ENCODE measurements at regions of chr14 and their contacts with region 1.

Region 1: DNA sequence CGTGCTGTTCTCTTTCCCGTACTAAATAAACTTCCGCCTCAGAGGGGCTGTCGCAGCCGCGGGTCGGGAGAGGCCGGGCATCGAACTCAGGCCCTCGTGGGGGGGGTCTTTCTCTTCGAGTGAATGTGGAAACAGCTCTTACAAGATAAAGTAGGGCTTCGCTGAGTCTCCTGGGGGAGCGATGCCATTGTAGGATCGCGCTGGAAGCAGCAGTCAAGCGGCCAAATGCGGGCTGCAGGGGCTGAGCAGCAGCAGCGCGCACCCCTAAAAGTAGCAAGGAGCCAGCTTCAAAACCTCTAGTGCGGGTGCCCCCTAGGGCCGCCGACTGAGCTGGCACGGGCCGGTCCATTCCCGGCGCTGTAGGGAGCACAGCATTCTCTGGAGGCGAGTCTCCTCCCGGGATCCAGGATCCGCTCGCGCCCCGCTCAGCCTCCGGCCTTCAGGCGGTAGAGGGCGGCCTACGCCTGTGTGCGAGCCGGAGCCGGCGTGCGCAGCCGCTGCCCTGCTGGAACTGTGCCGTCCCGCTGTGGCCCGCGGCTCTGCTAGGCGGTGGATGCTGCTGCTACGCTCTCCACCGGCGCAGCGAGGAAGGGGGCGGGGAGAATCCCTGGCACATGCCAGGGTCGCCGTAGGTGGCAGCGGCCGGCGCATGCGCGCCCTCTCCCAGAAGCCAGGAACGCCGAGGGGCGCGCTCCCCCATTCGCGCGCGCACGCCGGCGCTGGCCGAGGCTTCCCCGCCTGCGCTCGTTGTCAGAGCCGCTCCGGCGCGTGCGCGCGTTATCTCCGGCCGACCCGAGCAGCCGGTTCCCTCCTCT is at the start of gene FUT8:
- DNase-seq: peak; percentile 93
- ATAC-seq: peak; percentile 88
- H3K4me3 Mint-ChIP-seq: peak within 1 kb of the TSS; percentile 99
- H3K27ac Mint-ChIP-seq: peak within 1 kb of the TSS; percentile 99
- H3K4me1 Mint-ChIP-seq: peaks cover 42% of the 10 kb centered on the region
- H3K27me3 Mint-ChIP-seq: no peaks in the 10 kb centered on the region
- CTCF ChIP-seq: no peak
- total RNA-seq, gene FUT8: 115 and 123 TPM in 2 replicates

Region 2: GRCh38 chr14:63641473-63642228 is 1770.6 kb before region 1 on chr14 and contains the start of gene WDR89:
- CTCF ChIA-PET with region 1: no interaction called
- POLR2A ChIA-PET with region 1: no interaction called
- intact Hi-C with region 1: loop called (anchors 5 kb)
- DNase-seq: peak; percentile 84
- ATAC-seq: peak; percentile 83
- H3K4me3 Mint-ChIP-seq: peak within 1 kb of the TSS; percentile 92
- H3K27ac Mint-ChIP-seq: peak within 1 kb of the TSS; percentile 98
- H3K4me1 Mint-ChIP-seq: peaks cover 34% of the 10 kb centered on the region
- H3K27me3 Mint-ChIP-seq: no peaks in the 10 kb centered on the region
- CTCF ChIP-seq: no peak
- total RNA-seq, gene WDR89: 21.9 and 24.4 TPM in 2 replicates

Region 3: DNA sequence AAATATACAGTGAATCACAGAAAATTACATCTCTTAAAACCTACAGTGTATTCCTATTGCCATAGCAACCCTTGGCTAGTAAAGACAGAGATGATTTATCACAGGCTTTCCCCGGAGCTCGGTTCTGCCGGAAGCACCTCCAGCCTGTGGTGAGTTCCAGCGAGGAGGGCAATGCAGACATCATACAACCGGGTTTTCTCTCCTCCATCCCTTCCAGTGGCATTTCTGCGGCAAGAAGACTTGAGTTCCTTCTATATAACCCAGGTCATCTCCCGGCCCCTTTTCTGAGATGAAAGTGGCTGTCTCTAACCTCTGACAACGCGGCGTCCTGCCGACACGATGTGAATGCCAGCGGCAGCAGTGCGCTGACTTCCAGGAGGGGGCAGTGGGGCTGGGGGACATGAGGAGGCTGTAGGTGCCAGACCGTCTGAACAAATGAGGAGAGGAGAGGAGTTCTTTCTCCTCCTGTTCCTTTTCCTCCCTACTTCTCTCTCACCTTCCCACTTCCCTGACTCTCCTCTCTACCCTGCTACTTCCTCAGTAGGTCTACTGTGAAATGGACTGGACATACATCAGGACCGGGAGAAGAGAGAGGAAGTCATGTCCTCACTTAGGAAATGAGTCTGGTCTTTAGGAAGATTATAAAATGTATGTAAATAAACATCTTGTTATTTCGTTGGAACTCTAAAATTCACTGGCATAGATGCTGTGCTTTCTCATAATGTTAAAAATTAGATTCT is 241.3 kb before region 1 on chr14:
- CTCF ChIA-PET with region 1: interaction called, 65 read pairs
- POLR2A ChIA-PET with region 1: interaction called, 59 read pairs
- intact Hi-C with region 1: loop called (anchors 1 kb)
- DNase-seq: peak; percentile 52
- ATAC-seq: peak; percentile 56
- H3K4me3 Mint-ChIP-seq: peak overlapping the region; percentile 87
- H3K27ac Mint-ChIP-seq: peak overlapping the region; percentile 85
- H3K4me1 Mint-ChIP-seq: peaks cover 52% of the 10 kb centered on the region
- H3K27me3 Mint-ChIP-seq: no peaks in the 10 kb centered on the region
- CTCF ChIP-seq: no peak

Region 4: DNA sequence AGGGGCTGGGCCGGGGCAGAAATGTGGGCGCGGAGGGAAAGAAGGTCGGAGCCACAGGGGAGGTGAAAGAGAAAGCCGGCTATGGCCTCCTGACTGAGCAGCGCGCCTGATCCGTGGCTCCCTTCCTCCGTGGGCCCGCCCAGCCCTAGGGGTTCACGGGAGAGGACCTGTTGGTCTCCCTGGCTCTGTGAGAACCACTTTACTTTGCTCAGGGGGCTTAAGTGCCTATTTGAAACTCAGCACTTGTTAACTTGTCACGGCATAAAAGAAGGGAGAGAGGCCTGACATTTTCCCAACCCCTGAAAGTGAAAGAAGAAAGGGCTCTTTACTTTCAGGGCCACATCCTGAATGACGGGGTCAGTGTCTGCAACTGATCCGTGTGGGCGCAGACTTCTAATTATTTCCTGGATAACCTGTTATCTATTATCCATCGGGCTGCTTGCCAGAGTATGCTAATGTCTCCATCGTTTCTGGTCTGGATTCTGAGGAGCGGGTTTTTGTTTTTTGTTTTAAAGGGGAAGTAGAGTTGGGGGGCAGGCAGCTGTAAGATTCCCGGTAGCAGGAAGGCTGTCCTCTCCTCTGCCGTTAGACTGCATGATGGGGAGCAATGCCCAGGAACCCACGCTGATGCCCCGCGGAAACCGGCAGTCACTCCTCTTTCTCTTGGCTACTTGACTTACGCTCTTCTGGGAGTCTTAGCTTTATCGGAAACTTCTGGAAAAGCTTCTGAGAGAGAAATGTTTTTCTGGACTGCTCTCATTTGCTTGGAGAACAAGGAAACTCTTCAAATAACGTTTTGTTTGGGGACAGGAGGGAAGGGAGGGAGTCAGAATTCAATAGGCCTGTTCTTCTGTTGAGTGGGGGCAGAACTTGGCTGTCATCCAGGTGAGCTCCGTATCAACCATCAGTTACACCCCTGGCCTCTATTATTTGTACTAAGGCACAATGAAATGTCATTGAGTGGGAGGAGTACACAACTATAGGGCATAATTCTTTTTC is 182.2 kb before region 1 on chr14:
- CTCF ChIA-PET with region 1: interaction called, 46 read pairs
- POLR2A ChIA-PET with region 1: interaction called, 65 read pairs
- intact Hi-C with region 1: loop called (anchors 1 kb)
- DNase-seq: no peak
- ATAC-seq: peak; percentile 32
- H3K4me3 Mint-ChIP-seq: peak overlapping the region; percentile 86
- H3K27ac Mint-ChIP-seq: peak overlapping the region; percentile 87
- H3K4me1 Mint-ChIP-seq: peaks cover 64% of the 10 kb centered on the region
- H3K27me3 Mint-ChIP-seq: no peaks in the 10 kb centered on the region
- CTCF ChIP-seq: no peak

Region 5: DNA sequence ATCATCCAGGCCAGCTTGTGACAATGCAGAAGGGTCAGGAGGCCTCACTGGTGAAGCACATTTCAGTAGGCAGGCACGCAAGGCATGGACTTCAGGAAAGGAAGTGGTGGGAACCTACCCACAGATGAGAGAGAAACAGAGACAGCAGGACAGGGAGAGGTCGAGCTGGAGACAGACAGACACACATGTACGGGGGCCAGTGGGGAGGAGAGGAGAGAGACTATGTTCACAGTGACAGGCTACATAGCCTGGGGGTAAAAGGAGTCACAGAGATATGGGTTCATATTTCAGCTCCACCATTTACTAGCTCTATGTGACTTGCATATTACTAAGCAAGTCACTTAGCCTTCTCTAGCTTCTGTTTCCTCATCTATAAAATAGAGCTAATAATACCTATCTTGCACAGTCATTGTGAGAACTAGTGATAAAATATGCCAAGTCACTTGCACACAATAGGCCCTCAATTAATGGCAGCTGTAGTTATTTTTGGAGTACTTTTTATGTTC is 90.8 kb before region 1 on chr14:
- CTCF ChIA-PET with region 1: interaction called, 21 read pairs
- POLR2A ChIA-PET with region 1: interaction called, 133 read pairs
- intact Hi-C with region 1: loop called (anchors 1 kb)
- DNase-seq: no peak
- ATAC-seq: no peak
- H3K4me3 Mint-ChIP-seq: peak overlapping the region; percentile 21
- H3K27ac Mint-ChIP-seq: peak overlapping the region; percentile 62
- H3K4me1 Mint-ChIP-seq: peaks cover 77% of the 10 kb centered on the region
- H3K27me3 Mint-ChIP-seq: no peaks in the 10 kb centered on the region
- CTCF ChIP-seq: no peak

Region 6: DNA sequence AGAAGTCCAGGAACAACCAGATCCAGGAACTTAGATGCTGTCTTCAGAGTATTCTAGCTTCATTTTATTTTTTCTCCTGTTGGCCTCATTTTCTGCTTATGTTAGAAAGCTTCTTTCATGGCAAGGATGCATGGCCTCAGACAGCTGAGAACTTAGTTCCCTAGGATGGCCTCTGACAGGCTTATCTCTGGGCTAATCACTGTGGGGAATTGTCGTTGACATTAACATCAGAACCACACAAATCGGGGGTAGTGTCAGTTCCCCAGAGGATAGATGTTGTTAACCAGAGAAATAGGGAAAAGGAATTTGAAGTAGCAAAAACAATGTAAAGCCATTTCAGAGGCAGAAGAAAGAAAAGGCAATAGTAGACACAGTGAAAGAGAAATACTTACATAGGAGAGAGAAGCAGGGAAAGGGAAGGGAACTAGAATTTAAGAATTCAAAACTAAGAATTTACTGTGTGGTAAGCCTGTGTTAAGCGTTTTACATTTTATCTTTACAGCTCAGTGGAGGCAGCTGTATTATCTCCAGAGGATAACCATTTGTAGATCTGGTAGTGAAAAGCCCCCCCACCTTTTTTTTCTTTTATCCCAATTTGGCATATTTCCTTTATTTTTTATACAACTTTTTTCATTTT is 22.1 kb after region 1 on chr14:
- CTCF ChIA-PET with region 1: interaction called, 9 read pairs
- POLR2A ChIA-PET with region 1: interaction called, 15 read pairs
- intact Hi-C with region 1: no loop called
- DNase-seq: no peak
- ATAC-seq: no peak
- H3K4me3 Mint-ChIP-seq: peak overlapping the region; percentile 13
- H3K27ac Mint-ChIP-seq: peak overlapping the region; percentile 54
- H3K4me1 Mint-ChIP-seq: peaks cover 68% of the 10 kb centered on the region
- H3K27me3 Mint-ChIP-seq: no peaks in the 10 kb centered on the region
- CTCF ChIP-seq: no peak

Region 7: DNA sequence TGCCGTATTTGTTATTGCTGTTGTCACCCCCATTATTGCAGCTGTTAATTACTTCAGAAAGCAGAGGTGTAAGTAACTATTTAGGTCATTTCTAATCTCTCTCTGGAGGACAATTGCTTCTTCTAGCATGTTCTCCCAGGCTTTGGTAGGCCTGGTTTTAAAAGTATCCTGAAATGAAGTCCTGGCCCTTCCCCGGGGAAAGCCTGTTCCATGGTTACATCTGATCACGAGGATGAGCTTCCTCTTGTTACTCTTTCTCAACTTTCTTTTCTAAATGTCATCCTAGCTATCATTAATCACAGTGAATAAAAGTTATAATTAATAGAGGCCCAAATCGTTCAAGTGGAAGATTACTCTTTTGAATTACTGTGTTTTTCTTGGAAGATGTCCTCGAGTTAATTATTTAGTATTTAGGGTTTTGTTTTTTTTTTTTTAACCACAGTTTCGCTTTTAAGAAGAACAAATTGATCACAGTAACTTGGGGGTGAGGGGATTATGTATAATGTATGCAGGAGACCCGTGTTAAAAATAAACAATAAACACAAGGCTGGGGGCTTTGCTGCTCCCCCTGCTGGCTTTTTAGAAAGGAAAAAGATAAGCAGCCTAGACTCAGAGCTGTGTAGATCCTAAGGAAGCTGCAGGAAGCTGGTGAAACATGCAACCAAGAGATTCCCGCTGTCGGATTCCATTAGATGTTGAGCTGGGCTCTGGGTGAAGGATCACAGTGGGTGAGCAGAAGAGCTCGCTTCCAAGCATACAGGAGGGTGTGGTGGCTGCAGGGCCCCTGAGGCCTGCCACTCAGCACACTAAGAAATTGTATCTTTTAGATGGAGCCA is 420.4 kb after region 1 on chr14:
- CTCF ChIA-PET with region 1: interaction called, 214 read pairs
- POLR2A ChIA-PET with region 1: no interaction called
- intact Hi-C with region 1: no loop called
- DNase-seq: no peak
- ATAC-seq: no peak
- H3K4me3 Mint-ChIP-seq: no peak overlapping the region
- H3K27ac Mint-ChIP-seq: no peak overlapping the region
- H3K4me1 Mint-ChIP-seq: no peaks in the 10 kb centered on the region
- H3K27me3 Mint-ChIP-seq: peaks cover 6% of the 10 kb centered on the region
- CTCF ChIP-seq: no peak